WTC11 (cell line): ENCODE measurements at regions of chr5 and their contacts with region 1.

Region 1: DNA sequence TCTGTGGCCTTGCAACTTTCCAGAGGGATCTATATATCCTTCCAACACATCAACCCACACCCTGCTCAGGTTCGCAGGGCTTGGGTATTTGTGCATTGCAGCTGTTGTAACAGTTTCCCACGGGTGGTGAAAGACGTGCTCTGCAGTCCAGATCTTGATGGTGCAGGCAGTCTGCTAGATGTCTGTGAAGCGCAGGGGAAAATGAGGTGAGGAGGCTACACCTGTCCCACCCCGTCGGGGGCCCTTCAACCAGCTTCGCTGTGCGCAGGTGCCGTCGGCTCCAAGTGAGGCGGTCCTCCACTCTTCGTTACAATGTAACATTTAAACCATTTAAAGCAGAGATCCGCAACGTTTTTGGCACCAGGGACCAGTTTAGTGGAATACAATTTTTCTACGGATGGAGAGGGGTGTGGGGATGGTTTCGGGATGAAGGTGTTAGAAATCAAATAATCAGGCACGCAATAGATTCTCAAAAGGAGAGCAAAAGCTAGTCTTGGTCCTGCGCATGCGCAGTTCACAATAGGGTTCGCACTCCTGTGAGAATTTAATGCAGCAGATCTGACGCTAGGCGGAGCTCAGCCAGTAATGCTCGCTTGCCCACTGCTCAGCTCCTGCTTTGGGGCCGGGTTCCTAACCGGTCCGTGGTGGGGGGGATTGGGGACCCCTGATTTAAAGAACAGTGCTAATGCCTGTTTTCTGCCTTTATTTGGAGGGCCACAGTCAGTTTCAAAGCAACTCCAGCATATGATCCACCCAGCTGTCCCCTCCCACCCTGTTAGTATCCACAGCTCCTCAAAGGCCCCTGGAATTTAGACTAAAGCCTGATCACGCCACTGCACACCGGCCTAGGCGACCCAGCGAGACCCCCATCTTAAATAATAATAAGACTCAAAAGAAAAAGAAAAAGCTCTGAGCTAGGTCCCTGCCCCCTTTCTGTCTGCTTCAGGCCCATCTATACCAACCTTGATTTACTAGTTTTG is 97.1 kb upstream of the SELENOP start:
- DNase-seq: peak; percentile 89
- ATAC-seq: peak; percentile 96
- H3K4me3 Mint-ChIP-seq: peak overlapping the region; percentile 78
- H3K27ac Mint-ChIP-seq: no peak overlapping the region
- H3K4me1 Mint-ChIP-seq: peaks cover 12% of the 10 kb centered on the region
- H3K27me3 Mint-ChIP-seq: peaks cover 47% of the 10 kb centered on the region
- CTCF ChIP-seq: peak; percentile 38; the same call in 1 of the 2 replicates

Region 2: GRCh38 chr5:42889311-42889933 is 19.4 kb before region 1 on chr5:
- CTCF ChIA-PET with region 1: interaction called, 17 read pairs
- POLR2A ChIA-PET with region 1: no interaction called
- DNase-seq: peak; percentile 77
- ATAC-seq: peak; percentile 75
- H3K4me3 Mint-ChIP-seq: no peak overlapping the region
- H3K27ac Mint-ChIP-seq: no peak overlapping the region
- H3K4me1 Mint-ChIP-seq: peaks cover 1% of the 10 kb centered on the region; the same call in 1 of the 2 replicates
- H3K27me3 Mint-ChIP-seq: peaks cover 4% of the 10 kb centered on the region; the same call in 1 of the 2 replicates
- CTCF ChIP-seq: peak; percentile 77

Region 3: GRCh38 chr5:42970636-42971559 is 62.1 kb after region 1 on chr5:
- CTCF ChIA-PET with region 1: interaction called, 70 read pairs
- POLR2A ChIA-PET with region 1: interaction called, 4 read pairs
- DNase-seq: peak; percentile 82
- ATAC-seq: peak; percentile 98
- H3K4me3 Mint-ChIP-seq: no peak overlapping the region
- H3K27ac Mint-ChIP-seq: no peak overlapping the region
- H3K4me1 Mint-ChIP-seq: no peaks in the 10 kb centered on the region
- H3K27me3 Mint-ChIP-seq: no peaks in the 10 kb centered on the region
- CTCF ChIP-seq: no peak

Region 4: DNA sequence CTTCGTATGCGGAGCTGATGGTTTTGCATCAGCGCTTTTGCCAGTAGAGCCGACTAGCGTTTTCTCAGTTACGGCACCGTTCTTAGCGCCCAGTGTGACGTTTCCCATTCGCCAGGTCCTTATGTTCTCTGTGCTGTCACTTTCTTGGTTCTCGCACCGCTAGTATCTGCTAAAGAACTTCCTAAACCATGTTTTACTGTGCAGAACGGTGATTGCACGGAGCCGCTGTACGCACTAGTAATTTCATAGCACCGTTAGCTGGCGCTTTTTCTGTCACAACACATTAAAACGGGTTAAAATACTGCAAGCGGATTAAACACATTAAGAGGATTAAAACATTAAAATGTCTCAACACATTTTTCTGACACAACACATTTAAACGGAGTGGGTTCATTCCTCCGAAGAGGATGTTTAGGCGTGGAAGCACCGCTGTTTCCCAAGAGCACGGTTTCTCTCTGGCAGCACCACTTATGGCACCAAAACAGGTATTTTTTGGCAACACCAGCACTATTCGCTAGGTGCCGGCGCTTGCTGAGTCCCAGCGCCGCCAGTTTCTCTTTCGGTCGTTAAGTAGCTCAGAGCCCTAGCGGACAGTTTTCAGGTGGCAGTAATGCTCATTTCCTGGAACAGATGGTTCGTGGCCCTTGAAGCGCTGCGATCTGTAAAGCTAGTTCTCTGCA is 111.0 kb after region 1 on chr5:
- CTCF ChIA-PET with region 1: interaction called, 23 read pairs
- POLR2A ChIA-PET with region 1: no interaction called
- DNase-seq: peak; percentile 57
- ATAC-seq: peak; percentile 58
- H3K4me3 Mint-ChIP-seq: peak overlapping the region; percentile 80
- H3K27ac Mint-ChIP-seq: no peak overlapping the region
- H3K4me1 Mint-ChIP-seq: peaks cover 53% of the 10 kb centered on the region
- H3K27me3 Mint-ChIP-seq: peaks cover 99% of the 10 kb centered on the region
- CTCF ChIP-seq: no peak

Region 5: GRCh38 chr5:43215073-43215631 is 306.4 kb after region 1 on chr5:
- CTCF ChIA-PET with region 1: no interaction called
- POLR2A ChIA-PET with region 1: no interaction called
- DNase-seq: no peak
- ATAC-seq: no peak
- H3K4me3 Mint-ChIP-seq: no peak overlapping the region
- H3K27ac Mint-ChIP-seq: no peak overlapping the region
- H3K4me1 Mint-ChIP-seq: 0 out of 2 replicates have a peak, but pooled peaks cover 4% of the 10 kb centered on the region
- H3K27me3 Mint-ChIP-seq: peaks cover 3% of the 10 kb centered on the region
- CTCF ChIP-seq: no peak

Region 6: DNA sequence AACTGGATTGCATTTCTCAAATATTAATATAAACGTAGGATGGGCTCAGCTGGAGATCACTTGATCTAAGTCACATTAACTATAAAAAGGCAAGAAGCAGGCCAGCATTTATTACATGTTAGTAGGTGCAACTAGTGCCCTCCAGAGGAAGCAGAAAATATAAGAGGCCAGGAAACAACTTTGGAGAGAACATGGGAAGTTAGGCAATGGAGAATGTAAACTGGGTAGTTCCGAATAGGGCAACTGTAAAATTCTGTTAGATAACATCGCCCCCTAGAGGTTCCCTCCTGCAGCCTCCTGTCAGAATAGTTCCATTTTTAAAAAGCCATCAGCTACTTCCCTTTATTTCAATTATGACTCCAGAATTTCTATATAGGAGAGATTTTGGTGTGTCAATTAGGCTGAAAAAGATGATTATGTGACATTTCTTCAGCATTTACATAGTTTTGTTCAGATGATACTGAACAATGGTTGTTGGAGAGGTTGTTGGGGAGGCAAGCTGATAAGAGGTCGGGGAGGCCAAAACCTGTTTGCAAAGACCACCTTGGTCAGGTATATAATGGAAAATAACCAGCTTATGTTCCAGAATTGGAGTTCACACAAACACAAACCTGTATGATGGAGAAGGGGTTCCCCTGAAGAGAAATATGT is 481.0 kb after region 1 on chr5:
- CTCF ChIA-PET with region 1: interaction called, 10 read pairs
- POLR2A ChIA-PET with region 1: no interaction called
- DNase-seq: peak; percentile 39
- ATAC-seq: peak; percentile 98
- H3K4me3 Mint-ChIP-seq: no peak overlapping the region
- H3K27ac Mint-ChIP-seq: no peak overlapping the region
- H3K4me1 Mint-ChIP-seq: no peaks in the 10 kb centered on the region
- H3K27me3 Mint-ChIP-seq: no peaks in the 10 kb centered on the region; the same call in 1 of the 2 replicates
- CTCF ChIP-seq: peak; percentile 72